Activated CD8-positive, alpha-beta memory T cell treated with anti-CD3 and anti-CD28 coated beads, Interleukin-2, amount 10 ng/mL, durations not matched to agents 7 days and 5 days (primary cell): ENCODE measurements at regions of chr10 and their contacts with region 1.

Region 1: DNA sequence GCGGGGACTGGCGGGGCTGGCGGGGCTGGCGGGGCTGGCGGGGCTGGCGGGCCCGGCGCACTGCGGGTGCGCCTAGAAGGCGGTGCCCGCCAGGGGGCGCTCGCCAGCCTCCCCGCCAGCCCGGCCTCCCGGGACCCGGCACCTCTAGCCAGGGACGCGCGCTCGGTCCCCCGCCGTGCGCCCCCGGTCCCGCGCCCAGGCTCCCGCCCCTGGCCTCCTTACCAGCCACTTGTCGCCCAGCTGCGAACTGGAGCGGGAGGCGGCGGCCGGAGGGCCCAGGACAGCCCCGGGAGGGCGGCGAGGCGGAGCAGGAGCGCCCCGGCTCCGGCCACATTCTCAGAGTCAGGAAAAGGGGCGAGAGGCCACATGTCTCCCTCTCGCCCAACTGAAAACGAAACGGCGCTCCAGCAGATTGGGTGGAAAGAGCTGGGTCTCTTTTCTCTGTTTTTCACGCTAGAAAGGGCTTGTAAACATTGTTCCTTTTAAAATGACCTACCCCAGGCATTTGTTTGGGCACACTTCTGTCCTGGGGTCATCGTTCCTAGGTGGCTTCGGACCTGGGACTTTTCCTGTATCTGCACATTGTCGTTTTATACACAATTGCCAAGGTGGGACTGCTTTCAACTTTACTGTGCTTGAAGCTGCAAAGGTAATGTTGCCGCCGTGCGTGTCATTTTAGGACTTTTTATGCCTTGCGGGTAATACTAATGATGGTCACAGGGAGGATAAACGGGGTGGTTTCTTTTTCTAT is 378 bp upstream of the PRKCQ start:
- DNase-seq: peak; percentile 89
- ATAC-seq: peak; percentile 74
- H3K4me3 Mint-ChIP-seq: peak overlapping the region; percentile 97
- H3K27ac Mint-ChIP-seq: peak overlapping the region; percentile 93
- H3K4me1 Mint-ChIP-seq: peaks cover 59% of the 10 kb centered on the region
- H3K27me3 Mint-ChIP-seq: no peaks in the 10 kb centered on the region

Region 2: GRCh38 chr10:6530211-6530840 is 50.1 kb before region 1 on chr10:
- CTCF ChIA-PET with region 1: interaction called, 14 read pairs
- DNase-seq: peak; percentile 95
- ATAC-seq: peak; percentile 96
- H3K4me3 Mint-ChIP-seq: peak overlapping the region; percentile 77
- H3K27ac Mint-ChIP-seq: peak overlapping the region; percentile 100
- H3K4me1 Mint-ChIP-seq: peaks cover 55% of the 10 kb centered on the region
- H3K27me3 Mint-ChIP-seq: no peaks in the 10 kb centered on the region

Region 3: GRCh38 chr10:6563075-6563474 is 17.4 kb before region 1 on chr10:
- CTCF ChIA-PET with region 1: interaction called, 19 read pairs
- DNase-seq: peak; percentile 76
- ATAC-seq: peak; percentile 74
- H3K4me3 Mint-ChIP-seq: peak overlapping the region; percentile 53
- H3K27ac Mint-ChIP-seq: peak overlapping the region; percentile 79
- H3K4me1 Mint-ChIP-seq: peaks cover 84% of the 10 kb centered on the region
- H3K27me3 Mint-ChIP-seq: no peaks in the 10 kb centered on the region

Region 4: DNA sequence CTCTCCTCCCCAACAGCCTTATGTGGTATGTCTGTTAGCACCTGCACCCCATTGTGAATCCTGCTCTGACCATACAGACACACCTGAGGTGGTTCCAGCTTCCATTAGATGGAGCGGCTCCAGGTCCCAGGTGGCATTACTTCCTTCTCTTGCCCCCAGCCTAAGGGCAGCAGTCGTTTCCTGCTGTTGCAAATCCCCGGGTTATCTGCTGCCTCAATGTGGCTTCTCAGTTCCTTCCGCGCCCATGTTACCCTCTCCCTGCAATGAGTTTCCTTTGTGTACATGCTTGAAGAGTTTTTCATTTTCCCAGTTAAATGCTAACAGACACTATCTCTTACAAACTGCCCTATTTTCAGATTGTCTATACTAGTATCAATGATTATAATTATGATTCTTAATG is 62.4 kb after region 1 on chr10:
- CTCF ChIA-PET with region 1: interaction called, 56 read pairs
- DNase-seq: no peak
- ATAC-seq: peak; percentile 27
- H3K4me3 Mint-ChIP-seq: no peak overlapping the region
- H3K27ac Mint-ChIP-seq: peak overlapping the region; percentile 72
- H3K4me1 Mint-ChIP-seq: peaks cover 46% of the 10 kb centered on the region
- H3K27me3 Mint-ChIP-seq: no peaks in the 10 kb centered on the region

Region 5: DNA sequence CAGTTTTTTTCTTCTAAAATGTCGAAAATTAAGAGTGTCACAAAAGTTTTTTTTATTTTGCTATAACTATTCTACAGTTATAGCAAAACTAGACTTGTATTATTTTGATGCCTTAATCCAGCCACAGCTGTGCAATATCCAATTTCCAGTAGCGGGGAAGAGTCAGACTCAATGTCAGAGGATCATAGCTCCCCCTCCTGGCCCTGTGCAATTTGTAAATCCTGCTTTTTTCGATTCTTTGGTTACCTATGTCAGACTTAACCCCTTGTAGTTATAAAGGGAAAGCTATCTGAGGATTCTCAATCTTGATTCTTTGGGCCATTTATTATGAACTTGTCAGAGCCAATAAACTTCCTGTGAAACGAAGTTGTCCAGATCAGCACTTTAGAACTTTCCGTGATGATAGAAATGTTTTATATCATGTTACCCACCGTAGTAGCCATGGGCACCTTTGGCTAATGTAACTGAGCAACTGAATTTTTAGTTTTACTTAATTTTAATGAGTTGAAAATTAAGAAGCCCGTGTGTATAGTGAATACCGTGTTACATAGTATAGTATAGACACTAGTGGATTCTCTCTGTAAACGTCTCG is 87.3 kb after region 1 on chr10:
- CTCF ChIA-PET with region 1: interaction called, 30 read pairs
- DNase-seq: peak; percentile 67
- ATAC-seq: peak; percentile 34
- H3K4me3 Mint-ChIP-seq: no peak overlapping the region
- H3K27ac Mint-ChIP-seq: no peak overlapping the region
- H3K4me1 Mint-ChIP-seq: peaks cover 24% of the 10 kb centered on the region
- H3K27me3 Mint-ChIP-seq: peaks cover 8% of the 10 kb centered on the region